Activated CD4-positive, alpha-beta memory T cell treated with anti-CD3 and anti-CD28 coated beads, Interleukin-2, amount 10 ng/mL, durations not matched to agents 7 days and 5 days (primary cell): ENCODE measurements at regions of chr9 and their contacts with region 1.

Region 1: GRCh38 chr9:129863059-129863690 is 27.9 kb downstream of the USP20 start:
- DNase-seq: peak; percentile 92
- H3K4me3 Mint-ChIP-seq: peak overlapping the region; percentile 35
- H3K27ac Mint-ChIP-seq: peak overlapping the region; percentile 90
- H3K4me1 Mint-ChIP-seq: peaks cover 78% of the 10 kb centered on the region
- H3K27me3 Mint-ChIP-seq: no peaks in the 10 kb centered on the region

Region 2: DNA sequence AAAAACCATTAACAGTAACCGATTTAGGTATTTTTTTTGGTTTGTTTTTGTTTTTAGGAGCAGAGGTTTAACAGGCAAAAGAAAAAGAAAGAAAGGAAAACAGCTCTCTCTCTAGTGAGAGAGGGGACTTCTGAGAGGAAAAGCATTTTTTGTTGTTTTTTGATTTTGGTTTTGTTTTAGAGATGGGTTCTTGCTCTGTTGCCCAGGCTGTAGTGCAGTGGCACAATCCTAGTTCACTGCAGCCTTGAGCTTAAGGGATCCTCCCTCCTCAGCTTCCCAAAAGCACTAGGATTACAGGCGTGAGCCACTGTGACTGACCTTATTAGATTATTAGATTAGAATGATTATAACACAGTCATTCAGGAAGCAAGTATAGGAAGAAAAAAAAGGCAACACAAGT is 17.8 kb before region 1 on chr9:
- CTCF ChIA-PET with region 1: interaction called, 5 read pairs
- POLR2A ChIA-PET with region 1: interaction called, 10 read pairs
- DNase-seq: no peak
- H3K4me3 Mint-ChIP-seq: no peak overlapping the region
- H3K27ac Mint-ChIP-seq: peak overlapping the region; percentile 58
- H3K4me1 Mint-ChIP-seq: peaks cover 19% of the 10 kb centered on the region
- H3K27me3 Mint-ChIP-seq: no peaks in the 10 kb centered on the region

Region 3: DNA sequence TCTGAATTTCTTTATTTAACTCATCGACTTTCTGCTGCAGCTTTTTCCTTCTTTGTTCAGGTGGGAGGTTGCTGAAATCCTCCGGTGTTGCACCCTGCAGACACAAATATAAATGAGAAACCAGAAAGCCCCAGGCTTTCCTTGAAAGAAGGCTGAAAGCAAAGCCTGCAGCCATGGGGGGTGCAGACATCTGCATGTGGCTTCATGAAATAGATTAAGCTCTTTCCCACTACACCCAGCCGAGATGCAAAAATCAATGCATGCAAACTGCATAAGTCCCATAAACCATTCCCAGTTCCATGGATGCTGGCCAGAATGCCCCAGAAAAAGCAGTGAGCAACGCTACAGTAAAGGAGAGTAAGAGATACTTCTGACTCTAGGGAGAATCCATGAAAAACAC is 45.7 kb after region 1 on chr9:
- CTCF ChIA-PET with region 1: no interaction called
- POLR2A ChIA-PET with region 1: no interaction called
- DNase-seq: no peak
- H3K4me3 Mint-ChIP-seq: no peak overlapping the region
- H3K27ac Mint-ChIP-seq: peak overlapping the region; percentile 12
- H3K4me1 Mint-ChIP-seq: peaks cover 29% of the 10 kb centered on the region
- H3K27me3 Mint-ChIP-seq: no peaks in the 10 kb centered on the region